Naive thymus-derived CD4-positive, alpha-beta T cell (primary cell): ENCODE measurements at regions of chr4 and their contacts with region 1.

Region 1: GRCh38 chr4:59339631-59340030 is 1860.5 kb upstream of the ADGRL3 start:
- DNase-seq: no peak
- ATAC-seq: no peak
- H3K4me3 ChIP-seq: no peak overlapping the region
- H3K4me3 Mint-ChIP-seq: no peak overlapping the region
- H3K27ac ChIP-seq: no peak overlapping the region
- H3K27ac Mint-ChIP-seq: no peak overlapping the region
- H3K4me1 ChIP-seq: no peaks in the 10 kb centered on the region
- H3K4me1 Mint-ChIP-seq: no peaks in the 10 kb centered on the region
- H3K27me3 ChIP-seq: no peaks in the 10 kb centered on the region
- H3K27me3 Mint-ChIP-seq: no peaks in the 10 kb centered on the region

Region 2: GRCh38 chr4:59400334-59400733 is 60.7 kb after region 1 on chr4:
- CTCF ChIA-PET with region 1: no interaction called
- POLR2A ChIA-PET with region 1: no interaction called
- intact Hi-C with region 1: loop called in 1 of 2 experiments (anchors 10 kb)
- DNase-seq: no peak
- ATAC-seq: no peak
- H3K4me3 ChIP-seq: no peak overlapping the region
- H3K4me3 Mint-ChIP-seq: no peak overlapping the region
- H3K27ac ChIP-seq: no peak overlapping the region
- H3K27ac Mint-ChIP-seq: no peak overlapping the region
- H3K4me1 ChIP-seq: no peaks in the 10 kb centered on the region
- H3K4me1 Mint-ChIP-seq: no peaks in the 10 kb centered on the region
- H3K27me3 ChIP-seq: no peaks in the 10 kb centered on the region
- H3K27me3 Mint-ChIP-seq: no peaks in the 10 kb centered on the region

Region 3: DNA sequence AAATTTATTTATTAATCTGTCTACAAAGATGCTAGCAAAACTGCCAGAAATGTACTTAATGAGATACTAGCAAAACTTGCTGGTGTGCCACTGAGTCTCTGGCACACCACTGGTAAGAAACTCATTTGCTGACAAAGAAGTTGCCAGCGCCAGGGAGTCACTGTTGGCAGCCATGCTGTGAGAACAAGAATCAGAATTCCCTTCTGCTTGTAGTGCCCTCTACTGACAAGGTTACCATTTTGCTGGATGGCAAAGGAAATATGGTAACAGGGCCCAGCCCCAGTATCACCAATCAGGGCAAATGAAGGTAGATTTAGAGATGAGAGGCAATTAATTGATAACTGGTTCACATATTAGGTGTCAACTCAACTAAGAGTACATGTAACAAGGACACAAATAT is 1110.4 kb after region 1 on chr4:
- CTCF ChIA-PET with region 1: no interaction called
- POLR2A ChIA-PET with region 1: no interaction called
- intact Hi-C with region 1: no loop called
- DNase-seq: no peak
- ATAC-seq: no peak
- H3K4me3 ChIP-seq: no peak overlapping the region
- H3K4me3 Mint-ChIP-seq: no peak overlapping the region
- H3K27ac ChIP-seq: no peak overlapping the region
- H3K27ac Mint-ChIP-seq: no peak overlapping the region
- H3K4me1 ChIP-seq: no peaks in the 10 kb centered on the region
- H3K4me1 Mint-ChIP-seq: no peaks in the 10 kb centered on the region
- H3K27me3 ChIP-seq: no peaks in the 10 kb centered on the region
- H3K27me3 Mint-ChIP-seq: no peaks in the 10 kb centered on the region